Cardiac septum (tissue), 1 donor: ENCODE measurements at regions of chr18 and their contacts with region 1.

Region 1: DNA sequence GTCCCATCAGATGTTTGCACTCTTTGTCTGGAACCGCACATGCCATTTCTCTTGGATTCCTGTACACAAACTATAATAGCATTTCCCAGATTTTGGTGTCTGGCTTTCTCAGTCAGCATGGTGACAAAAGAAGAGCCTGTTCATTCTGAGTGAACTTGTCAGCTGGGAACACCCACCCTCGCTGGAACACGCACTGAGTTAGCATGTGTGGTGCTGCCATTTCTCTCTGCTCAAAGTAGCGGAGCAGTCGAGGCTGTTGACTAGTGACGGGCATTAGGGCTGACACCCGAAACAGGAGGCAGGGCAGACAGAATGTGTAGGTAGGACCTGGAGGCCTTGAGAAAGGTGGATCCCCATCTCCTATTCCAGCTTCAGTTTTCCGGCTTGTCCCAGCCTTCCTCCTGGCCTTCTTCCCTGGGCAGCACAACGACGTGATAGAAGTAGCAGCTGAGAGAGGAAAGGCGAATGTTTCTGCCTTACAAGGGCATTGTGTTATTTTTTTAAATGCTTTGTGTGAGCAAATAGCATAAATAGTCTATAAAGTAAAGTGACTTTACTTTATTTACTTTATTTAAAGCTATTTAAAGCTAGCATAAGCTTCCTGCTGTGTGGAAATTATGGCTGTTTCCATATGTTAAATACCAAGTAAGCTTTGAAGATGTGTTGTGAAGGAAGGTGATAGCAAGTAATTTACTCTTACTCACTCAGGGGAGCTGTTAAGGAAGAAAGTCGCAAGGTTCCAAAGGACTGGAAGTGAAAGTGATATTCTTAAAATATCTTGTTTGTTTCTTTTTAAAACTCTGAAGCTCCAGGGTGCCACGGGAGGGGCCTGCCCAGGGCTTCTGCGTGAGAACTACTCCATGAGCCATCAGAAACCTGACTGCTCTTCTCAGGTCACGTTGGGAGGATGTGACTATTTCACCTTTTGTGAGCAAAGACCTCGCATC is 272.6 kb downstream of the NEDD4L start:
- DNase-seq: no peak

Region 2: GRCh38 chr18:58257461-58257860 is 59.2 kb before region 1 on chr18:
- intact Hi-C with region 1: loop called (anchors 2 kb)
- DNase-seq: no peak

Region 3: GRCh38 chr18:58378411-58379379 is 62.0 kb after region 1 on chr18:
- intact Hi-C with region 1: no loop called
- DNase-seq: no peak